ENCODE measurements at regions of chr1 and their contacts with region 1.

Region 1: DNA sequence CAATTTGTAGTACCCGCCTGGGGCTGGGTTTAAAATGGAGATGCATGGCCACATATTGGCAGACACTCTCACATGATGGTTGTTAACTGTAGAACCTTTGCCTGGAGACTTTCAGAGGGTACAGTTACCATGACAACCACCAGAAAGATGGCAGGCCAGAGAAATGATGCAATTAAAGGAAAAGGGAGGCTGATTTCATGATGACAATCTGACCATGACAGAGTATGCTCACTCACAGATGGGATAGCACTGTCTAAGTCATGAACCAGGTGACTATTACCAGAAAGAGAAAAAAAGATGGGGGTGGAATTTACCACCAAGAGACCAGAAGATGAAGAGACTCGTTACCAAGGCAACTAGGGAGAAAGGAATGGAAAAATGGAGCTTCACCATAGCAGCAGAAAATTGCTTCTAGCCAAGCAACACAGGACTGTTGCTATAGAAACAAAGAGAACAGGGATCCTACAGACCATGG is 3.5 kb upstream of the TRIT1 start:
- DNase-seq: no peak
- ATAC-seq: no peak
- H3K4me3 ChIP-seq: no peak overlapping the region
- H3K4me3 Mint-ChIP-seq: no peak overlapping the region
- H3K27ac ChIP-seq: no peak overlapping the region
- H3K27ac Mint-ChIP-seq: no peak overlapping the region
- H3K4me1 ChIP-seq: peaks cover 11% of the 10 kb centered on the region
- H3K4me1 Mint-ChIP-seq: peaks cover 15% of the 10 kb centered on the region
- H3K27me3 ChIP-seq: peaks cover 0 to 4% of the 10 kb centered on the region in 2 experiments
- H3K27me3 Mint-ChIP-seq: peaks cover 5% of the 10 kb centered on the region
- CTCF ChIP-seq: no peak

Region 2: GRCh38 chr1:39954816-39955546 is 68.2 kb after region 1 on chr1 and contains the start of gene MFSD2A:
- CTCF ChIA-PET with region 1: no interaction called
- POLR2A ChIA-PET with region 1: no interaction called
- intact Hi-C with region 1: loop called in 1 of 2 experiments (anchors 2 kb)
- DNase-seq: peak; percentile 71 to 91 (median 86)
- ATAC-seq: peak; percentile 96
- H3K4me3 ChIP-seq: peak within 1 kb of the TSS; percentile 68 to 82
- H3K4me3 Mint-ChIP-seq: peak within 1 kb of the TSS; percentile 94
- H3K27ac ChIP-seq: no peak within 1 kb of the TSS
- H3K27ac Mint-ChIP-seq: peak within 1 kb of the TSS; percentile 55
- H3K4me1 ChIP-seq: peaks cover 15% of the 10 kb centered on the region
- H3K4me1 Mint-ChIP-seq: peaks cover 14% of the 10 kb centered on the region
- H3K27me3 ChIP-seq: no peaks in the 10 kb centered on the region
- H3K27me3 Mint-ChIP-seq: no peaks in the 10 kb centered on the region
- CTCF ChIP-seq: no peak
- total RNA-seq, gene MFSD2A: 5.9 to 6.4 TPM

Region 3: GRCh38 chr1:40167317-40167716 is 280.5 kb after region 1 on chr1:
- CTCF ChIA-PET with region 1: no interaction called
- POLR2A ChIA-PET with region 1: no interaction called
- intact Hi-C with region 1: no loop called
- DNase-seq: no peak
- ATAC-seq: no peak
- H3K4me3 ChIP-seq: no peak overlapping the region
- H3K4me3 Mint-ChIP-seq: no peak overlapping the region
- H3K27ac ChIP-seq: no peak overlapping the region
- H3K27ac Mint-ChIP-seq: no peak overlapping the region
- H3K4me1 ChIP-seq: peaks cover 49% of the 10 kb centered on the region
- H3K4me1 Mint-ChIP-seq: peaks cover 48% of the 10 kb centered on the region
- H3K27me3 ChIP-seq: no peaks in the 10 kb centered on the region
- H3K27me3 Mint-ChIP-seq: no peaks in the 10 kb centered on the region
- CTCF ChIP-seq: no peak